ENCODE measurements at regions of chr5 and their contacts with region 1.

Region 1: GRCh38 chr5:177351385-177352329 is at the start of gene LMAN2:
- DNase-seq: peak; percentile 97
- H3K4me3 ChIP-seq: peak within 1 kb of the TSS; percentile 58 to 86 (median 74)
- H3K27ac ChIP-seq: peak within 1 kb of the TSS; percentile 88
- H3K4me1 ChIP-seq: peaks cover 19% of the 10 kb centered on the region
- H3K27me3 ChIP-seq: no peaks in the 10 kb centered on the region
- CTCF ChIP-seq: no peak
- total RNA-seq, gene LMAN2: 114 to 201 TPM

Region 2: DNA sequence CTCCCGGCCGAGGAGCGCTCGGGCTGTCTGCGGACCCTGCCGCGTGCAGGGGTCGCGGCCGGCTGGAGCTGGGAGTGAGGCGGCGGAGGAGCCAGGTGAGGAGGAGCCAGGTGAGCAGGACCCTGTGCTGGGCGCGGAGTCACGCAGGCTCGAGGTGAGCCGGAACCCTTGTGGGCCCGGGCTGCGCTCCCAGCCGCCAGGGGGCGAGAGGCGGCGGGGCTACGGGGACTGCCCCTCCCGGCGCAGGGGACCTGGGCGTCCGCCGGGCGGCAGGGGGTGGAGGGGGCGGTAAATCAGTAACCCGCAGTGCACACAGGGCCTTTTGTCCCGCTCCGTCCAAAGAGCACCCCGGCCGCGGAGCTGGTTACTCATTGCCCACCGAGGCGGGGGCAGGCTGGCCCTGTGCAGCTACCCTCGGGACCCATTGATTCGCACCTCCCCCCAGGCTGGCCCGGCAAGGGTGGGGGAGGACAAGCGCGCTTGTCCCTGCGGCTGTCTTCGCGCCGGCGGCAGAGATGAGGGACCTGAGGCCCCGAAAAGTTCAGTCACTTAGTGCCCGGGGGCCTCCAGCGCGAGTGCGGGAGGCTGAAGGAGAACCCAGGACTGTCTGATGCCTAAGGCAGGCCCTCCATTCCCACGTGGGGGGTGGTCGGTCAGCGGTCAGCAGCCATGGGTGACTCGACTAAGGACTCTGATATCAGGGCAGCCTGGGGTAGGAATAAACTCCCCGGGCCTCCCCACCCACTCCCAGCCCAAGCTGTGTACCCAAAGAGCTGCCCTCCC is 264.5 kb before region 1 on chr5:
- CTCF ChIA-PET with region 1: interaction called, 12 read pairs
- dilution Hi-C with region 1: no loop called
- in situ Hi-C with region 1: no loop called
- intact Hi-C with region 1: no loop called
- DNase-seq: peak; percentile 14
- H3K4me3 ChIP-seq: peak overlapping the region in 2 of 3 experiments; percentile 42 to 45
- H3K27ac ChIP-seq: no peak overlapping the region
- H3K4me1 ChIP-seq: peaks cover 8% of the 10 kb centered on the region
- H3K27me3 ChIP-seq: peaks cover 2% of the 10 kb centered on the region
- CTCF ChIP-seq: peak; percentile 15 to 55

Region 3: GRCh38 chr5:177303121-177303924 is 48.3 kb before region 1 on chr5 and contains the starts of genes PRELID1 and RAB24:
- CTCF ChIA-PET with region 1: no interaction called
- dilution Hi-C with region 1: no loop called
- in situ Hi-C with region 1: no loop called
- intact Hi-C with region 1: no loop called
- DNase-seq: peak; percentile 78
- H3K4me3 ChIP-seq: peak within 1 kb of the TSS; percentile 54 to 95 (median 85)
- H3K27ac ChIP-seq: peak within 1 kb of the TSS; percentile 82
- H3K4me1 ChIP-seq: peaks cover 49% of the 10 kb centered on the region
- H3K27me3 ChIP-seq: no peaks in the 10 kb centered on the region
- CTCF ChIP-seq: peak in 1 of 2 donors; percentile 46
- total RNA-seq, gene PRELID1: 51.5 to 181 TPM
- total RNA-seq, gene RAB24: 10.3 to 21.4 TPM

Region 4: GRCh38 chr5:177317959-177318377 is 33.7 kb before region 1 on chr5:
- CTCF ChIA-PET with region 1: no interaction called
- dilution Hi-C with region 1: no loop called
- in situ Hi-C with region 1: no loop called
- intact Hi-C with region 1: loop called (anchors 5 kb)
- DNase-seq: peak; percentile 61
- H3K4me3 ChIP-seq: no peak overlapping the region
- H3K27ac ChIP-seq: no peak overlapping the region
- H3K4me1 ChIP-seq: peaks cover 2% of the 10 kb centered on the region
- H3K27me3 ChIP-seq: no peaks in the 10 kb centered on the region
- CTCF ChIP-seq: peak; percentile 88

Region 5: DNA sequence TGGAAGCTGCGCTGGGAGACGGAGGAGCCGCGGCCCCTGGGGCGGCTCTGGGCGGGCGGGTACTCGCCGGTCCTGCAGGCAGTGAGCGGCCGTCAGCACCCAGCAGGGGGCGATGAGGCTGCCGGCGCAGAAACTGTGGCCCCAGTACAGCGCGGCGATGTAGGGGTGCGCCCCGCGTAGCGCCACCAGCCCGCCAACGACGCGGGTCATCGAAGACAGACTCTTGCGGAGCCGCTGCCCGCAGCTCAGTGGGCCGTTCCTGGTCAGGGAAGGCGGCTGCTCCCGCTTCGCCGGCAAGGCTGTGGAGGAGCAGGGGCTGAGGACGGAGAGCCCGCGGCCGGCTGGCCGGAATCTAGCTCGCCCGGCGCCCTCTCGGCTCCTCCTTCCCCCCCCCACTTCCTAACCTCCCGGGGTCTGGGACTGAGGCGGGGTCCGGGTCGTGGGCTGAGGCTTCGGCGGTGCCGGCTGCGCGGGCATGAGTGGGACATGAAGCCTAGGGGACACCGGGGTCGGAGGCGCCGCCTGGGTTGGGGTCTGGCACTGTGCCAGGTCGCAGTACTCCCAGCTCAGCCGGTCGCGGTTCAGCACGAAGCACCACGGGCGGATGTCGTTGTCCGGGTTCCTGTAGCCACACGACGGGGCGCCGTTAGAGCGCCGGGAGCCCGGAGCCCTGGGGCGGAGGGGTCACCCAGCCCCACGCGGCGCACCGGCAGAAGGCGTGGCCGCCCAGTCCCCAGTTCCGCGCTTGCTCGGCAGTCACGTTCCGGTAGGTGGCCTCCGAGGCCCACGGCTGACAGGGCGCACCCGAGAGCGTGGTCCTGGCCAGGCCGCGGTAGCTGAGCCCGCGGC is 52.4 kb after region 1 on chr5:
- CTCF ChIA-PET with region 1: no interaction called
- dilution Hi-C with region 1: no loop called
- in situ Hi-C with region 1: no loop called
- intact Hi-C with region 1: no loop called
- DNase-seq: peak; percentile 65
- H3K4me3 ChIP-seq: peak overlapping the region; percentile 55 to 74 (median 65)
- H3K27ac ChIP-seq: no peak overlapping the region
- H3K4me1 ChIP-seq: peaks cover 28% of the 10 kb centered on the region
- H3K27me3 ChIP-seq: no peaks in the 10 kb centered on the region
- CTCF ChIP-seq: peak; percentile 35 to 82

Region 6: GRCh38 chr5:177509991-177510566 is 158.4 kb after region 1 on chr5:
- CTCF ChIA-PET with region 1: no interaction called
- dilution Hi-C with region 1: loop called (anchors 5 kb)
- in situ Hi-C with region 1: no loop called
- intact Hi-C with region 1: no loop called
- DNase-seq: no peak
- H3K4me3 ChIP-seq: no peak overlapping the region
- H3K27ac ChIP-seq: no peak overlapping the region
- H3K4me1 ChIP-seq: no peaks in the 10 kb centered on the region
- H3K27me3 ChIP-seq: no peaks in the 10 kb centered on the region
- CTCF ChIP-seq: no peak